PC-9 (cell line): ENCODE measurements at regions of chr3 and their contacts with region 1.

Region 1: DNA sequence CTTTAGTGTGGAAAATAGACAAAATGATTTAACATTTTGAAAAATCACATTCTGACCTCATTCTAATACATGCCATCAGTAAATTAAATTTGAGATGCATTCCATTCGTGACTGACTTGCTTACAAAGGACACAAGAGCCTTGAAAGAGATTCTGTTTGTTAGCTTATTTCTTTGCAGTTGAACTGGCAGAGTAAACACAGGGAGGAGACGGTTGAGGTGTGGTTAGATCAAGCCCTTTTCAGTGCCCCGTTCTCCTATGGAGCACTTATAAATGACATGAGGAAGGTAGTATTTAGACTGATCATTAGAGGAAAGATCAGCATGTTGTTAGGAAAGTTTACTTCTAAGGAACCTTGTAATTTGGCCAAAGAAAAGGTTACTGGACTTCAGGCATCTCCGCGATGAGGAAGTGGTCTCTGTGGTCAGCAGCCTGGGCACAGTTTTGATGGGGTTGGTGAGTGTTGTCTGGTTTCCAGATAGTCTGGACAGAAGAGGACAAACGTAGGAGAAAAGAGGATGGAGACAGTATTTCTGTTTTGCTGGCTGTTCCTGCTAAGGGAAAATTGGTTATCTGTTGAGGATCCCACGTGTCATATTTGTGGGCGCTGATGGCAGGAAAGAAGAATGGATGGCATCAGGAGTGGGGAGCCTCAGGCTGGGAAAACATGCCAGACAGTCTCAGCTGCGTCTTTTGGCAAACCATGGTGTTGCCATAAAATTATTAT is 328.9 kb upstream of the TBL1XR1 start:
- DNase-seq: peak; percentile 25 to 87
- H3K4me3 ChIP-seq: no peak overlapping the region
- H3K27ac ChIP-seq: no peak overlapping the region
- H3K4me1 ChIP-seq: peaks cover 79% of the 10 kb centered on the region
- H3K27me3 ChIP-seq: no peaks in the 10 kb centered on the region
- CTCF ChIP-seq: no peak

Region 2: GRCh38 chr3:177512945-177513814 is 13.0 kb before region 1 on chr3:
- CTCF ChIA-PET with region 1: no interaction called
- POLR2A ChIA-PET with region 1: no interaction called
- intact Hi-C with region 1: no loop called
- DNase-seq: no peak
- H3K4me3 ChIP-seq: no peak overlapping the region
- H3K27ac ChIP-seq: no peak overlapping the region
- H3K4me1 ChIP-seq: no peaks in the 10 kb centered on the region
- H3K27me3 ChIP-seq: no peaks in the 10 kb centered on the region
- CTCF ChIP-seq: no peak

Region 3: GRCh38 chr3:177744873-177745606 is 218.9 kb after region 1 on chr3:
- CTCF ChIA-PET with region 1: no interaction called
- POLR2A ChIA-PET with region 1: no interaction called
- intact Hi-C with region 1: loop called (anchors 10 kb)
- DNase-seq: peak; percentile 72 to 75
- H3K4me3 ChIP-seq: no peak overlapping the region
- H3K27ac ChIP-seq: no peak overlapping the region
- H3K4me1 ChIP-seq: peaks cover 13% of the 10 kb centered on the region
- H3K27me3 ChIP-seq: no peaks in the 10 kb centered on the region
- CTCF ChIP-seq: no peak

Region 4: DNA sequence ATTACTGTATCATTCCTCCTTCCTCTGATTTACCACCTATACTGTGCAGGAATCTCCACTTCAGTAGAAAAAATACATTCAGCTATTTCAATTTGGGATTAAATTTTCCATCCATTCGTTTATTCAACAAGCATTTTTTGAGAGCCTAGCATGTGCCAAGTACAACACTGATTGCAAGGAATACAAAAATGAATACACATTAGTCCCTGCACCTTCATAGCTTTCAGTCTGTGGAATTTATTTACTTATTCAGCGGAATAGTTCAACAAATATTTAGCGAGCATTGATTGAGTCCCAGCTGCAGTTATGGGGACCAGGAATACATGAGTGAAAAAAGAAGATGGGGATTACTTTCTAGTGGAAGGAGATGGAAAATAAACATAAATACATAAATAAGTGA is 277.9 kb after region 1 on chr3:
- CTCF ChIA-PET with region 1: no interaction called
- POLR2A ChIA-PET with region 1: no interaction called
- intact Hi-C with region 1: no loop called
- DNase-seq: no peak
- H3K4me3 ChIP-seq: no peak overlapping the region
- H3K27ac ChIP-seq: no peak overlapping the region
- H3K4me1 ChIP-seq: no peaks in the 10 kb centered on the region; the same call in 1 of the 2 replicates
- H3K27me3 ChIP-seq: no peaks in the 10 kb centered on the region
- CTCF ChIP-seq: no peak

Region 5: DNA sequence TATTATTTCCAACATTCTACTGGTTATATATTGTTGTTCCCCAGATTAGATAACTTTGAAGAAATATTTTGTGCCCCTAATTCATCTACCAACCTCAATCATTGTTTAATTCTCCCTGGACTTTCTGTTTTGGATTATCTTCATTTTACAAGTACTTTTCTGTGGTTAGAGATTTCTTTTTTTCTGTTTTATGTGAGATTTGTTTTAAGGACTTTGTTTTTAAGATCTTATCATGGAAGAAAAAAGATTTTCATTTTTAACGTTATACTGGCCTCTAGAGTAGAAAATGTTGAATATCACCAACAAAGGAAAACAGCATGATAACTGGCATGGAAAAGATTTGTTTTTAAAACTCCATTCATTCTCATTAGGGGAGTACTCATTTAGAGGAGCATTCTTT is 799.2 kb after region 1 on chr3:
- CTCF ChIA-PET with region 1: no interaction called
- POLR2A ChIA-PET with region 1: no interaction called
- intact Hi-C with region 1: no loop called
- DNase-seq: no peak
- H3K4me3 ChIP-seq: no peak overlapping the region
- H3K27ac ChIP-seq: no peak overlapping the region
- H3K4me1 ChIP-seq: peaks cover 13% of the 10 kb centered on the region
- H3K27me3 ChIP-seq: no peaks in the 10 kb centered on the region
- CTCF ChIP-seq: peak; percentile 72